Dendritic cell treated with granulocyte-macrophage colony-stimulating factor and Interleukin-4, amounts not matched to agents 40 ng/mL and 50 ng/mL, for 4 days (primary cell): ENCODE measurements at regions of chr13 and their contacts with region 1.

Region 1: DNA sequence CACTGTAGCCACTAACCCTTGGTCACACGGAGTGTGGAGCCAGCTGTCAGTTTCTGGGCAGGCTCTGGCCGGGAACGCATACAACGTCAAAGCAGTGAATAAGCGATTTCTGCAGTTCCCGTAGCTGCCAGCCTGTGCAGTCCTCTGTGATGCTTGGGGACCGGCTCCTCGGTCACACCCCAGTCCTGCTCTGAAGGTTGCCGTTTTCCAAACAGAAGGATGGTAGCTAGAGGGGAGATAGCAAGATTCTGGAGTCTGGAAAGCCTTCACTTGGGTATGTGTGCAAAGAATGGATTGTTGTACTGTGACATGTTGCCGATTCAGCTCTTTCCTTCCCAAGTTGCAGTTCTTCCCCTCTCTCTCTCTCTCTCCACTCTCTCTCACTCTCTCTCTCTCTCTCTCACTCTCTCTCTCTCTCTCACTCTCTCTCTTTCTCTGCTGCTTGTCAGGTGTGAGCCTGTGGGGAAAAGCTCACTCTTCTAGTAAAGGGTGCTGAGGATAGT is 38.7 kb upstream of the C1QTNF9 start:
- H3K4me3 Mint-ChIP-seq: peak overlapping the region; percentile 84
- H3K27ac Mint-ChIP-seq: peak overlapping the region; percentile 94
- H3K4me1 Mint-ChIP-seq: peaks cover 64% of the 10 kb centered on the region
- H3K27me3 Mint-ChIP-seq: no peaks in the 10 kb centered on the region

Region 2: GRCh38 chr13:24087605-24088225 is 183.0 kb before region 1 on chr13:
- intact Hi-C with region 1: no loop called
- H3K4me3 Mint-ChIP-seq: no peak overlapping the region
- H3K27ac Mint-ChIP-seq: no peak overlapping the region
- H3K4me1 Mint-ChIP-seq: no peaks in the 10 kb centered on the region
- H3K27me3 Mint-ChIP-seq: peaks cover 11% of the 10 kb centered on the region

Region 3: GRCh38 chr13:24233351-24233901 is 37.3 kb before region 1 on chr13:
- intact Hi-C with region 1: loop called (anchors 1 kb)
- H3K4me3 Mint-ChIP-seq: no peak overlapping the region
- H3K27ac Mint-ChIP-seq: no peak overlapping the region
- H3K4me1 Mint-ChIP-seq: no peaks in the 10 kb centered on the region
- H3K27me3 Mint-ChIP-seq: no peaks in the 10 kb centered on the region

Region 4: DNA sequence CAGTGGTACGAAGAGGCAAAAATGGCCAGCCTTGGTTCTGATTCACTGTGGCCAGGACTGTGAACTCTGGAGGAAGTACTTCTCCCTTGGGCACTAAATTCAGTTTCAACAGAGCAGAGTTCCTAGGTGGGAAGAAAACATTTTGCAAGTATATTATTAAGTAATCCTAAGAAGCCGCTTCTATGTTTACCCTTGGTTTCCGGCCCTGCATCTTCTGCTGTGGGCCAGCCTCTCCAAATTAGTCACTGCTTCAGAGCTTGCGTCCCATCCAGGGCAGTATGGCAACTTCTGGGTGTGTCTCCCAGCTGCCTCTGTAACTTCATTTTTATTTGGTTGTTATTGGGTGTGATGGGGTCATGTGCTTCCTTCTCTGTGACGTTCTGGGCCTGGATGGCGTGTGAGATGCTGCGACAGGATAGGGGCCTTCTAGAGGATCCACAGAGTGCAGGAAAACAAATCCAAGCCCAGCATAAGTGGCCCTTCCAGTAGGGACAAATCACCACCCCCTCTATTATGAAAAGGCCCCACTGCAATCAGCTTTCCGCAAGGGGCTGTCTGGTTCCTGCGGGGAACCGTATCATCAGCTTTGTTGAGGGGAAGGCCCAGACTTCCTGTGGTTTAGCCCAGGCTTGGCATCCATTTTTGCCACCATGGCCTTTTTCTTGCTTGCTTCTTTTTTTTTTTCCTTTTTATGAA is 16.4 kb before region 1 on chr13:
- intact Hi-C with region 1: loop called (anchors 2 kb)
- H3K4me3 Mint-ChIP-seq: no peak overlapping the region
- H3K27ac Mint-ChIP-seq: peak overlapping the region; percentile 81
- H3K4me1 Mint-ChIP-seq: peaks cover 53% of the 10 kb centered on the region
- H3K27me3 Mint-ChIP-seq: no peaks in the 10 kb centered on the region

Region 5: DNA sequence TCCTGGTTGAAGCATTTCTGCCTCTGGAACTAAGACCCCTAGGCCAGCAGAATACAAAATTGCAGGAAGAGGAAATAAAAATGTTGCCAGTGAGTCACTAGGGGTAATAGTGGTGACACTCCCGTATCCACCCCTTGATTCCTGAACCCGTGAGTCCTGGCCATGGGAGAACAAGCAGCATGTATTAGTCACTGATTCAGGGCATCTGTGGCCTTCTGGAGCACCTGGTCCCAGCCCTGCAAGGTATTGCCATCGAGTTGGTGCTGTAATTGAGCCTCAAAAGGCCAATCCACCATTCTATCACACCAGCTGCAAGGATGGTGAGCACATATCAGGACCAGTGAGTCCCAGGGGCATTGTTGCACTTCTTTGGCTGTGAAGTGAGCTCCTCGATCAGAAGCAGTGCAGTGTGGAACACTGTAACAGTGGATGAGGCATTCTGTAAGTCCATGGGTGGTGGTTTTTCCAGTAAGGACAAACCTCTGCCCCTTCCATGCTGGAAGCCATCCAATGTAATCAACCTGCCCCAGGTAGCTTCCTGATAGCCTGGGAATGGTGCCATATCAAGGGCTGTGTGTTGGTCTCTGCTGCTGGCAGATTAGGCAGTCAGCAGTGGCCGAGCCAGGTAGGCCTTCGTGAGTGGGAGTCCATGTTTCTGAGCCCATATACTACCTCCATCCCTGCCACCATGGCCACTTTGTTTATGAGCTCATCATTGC is 78.3 kb after region 1 on chr13:
- intact Hi-C with region 1: no loop called
- H3K4me3 Mint-ChIP-seq: no peak overlapping the region
- H3K27ac Mint-ChIP-seq: no peak overlapping the region
- H3K4me1 Mint-ChIP-seq: no peaks in the 10 kb centered on the region
- H3K27me3 Mint-ChIP-seq: peaks cover 8% of the 10 kb centered on the region

Region 6: DNA sequence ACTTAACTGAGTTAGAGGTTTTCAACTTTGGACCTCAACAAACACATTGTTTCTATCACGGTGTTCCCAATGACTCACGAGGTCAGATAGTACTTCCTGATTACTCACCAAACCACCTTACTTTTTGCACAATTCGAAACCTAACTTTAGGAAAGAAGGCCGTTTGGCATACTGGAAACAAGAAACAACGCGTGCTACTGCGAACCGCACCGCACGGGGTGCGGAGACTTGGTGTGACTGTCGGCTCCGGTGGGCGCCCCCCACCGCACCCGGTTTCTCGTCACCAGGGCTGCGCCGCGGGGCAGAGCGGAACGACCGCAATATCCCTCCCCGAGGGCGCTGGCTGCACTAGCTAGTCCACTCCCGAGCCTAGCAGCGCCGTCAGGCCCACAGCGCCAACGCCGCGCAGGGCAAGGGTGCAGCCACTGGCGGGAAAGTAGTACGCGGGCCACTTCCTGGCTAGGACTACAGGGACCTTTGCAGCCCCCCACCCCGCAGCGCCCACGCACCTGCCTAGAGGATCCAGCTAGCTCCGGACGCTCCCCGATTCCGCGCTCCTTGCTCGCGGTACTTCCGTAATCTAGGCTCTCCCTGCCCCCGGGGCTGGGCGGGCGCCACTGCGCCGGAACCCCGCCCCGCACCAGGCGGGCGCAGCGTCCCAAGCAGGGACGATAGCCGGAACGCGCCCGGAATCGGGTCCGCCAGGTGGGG is 241.7 kb after region 1 on chr13 and contains the start of gene PARP4:
- intact Hi-C with region 1: loop called (anchors 10 kb)
- H3K4me3 Mint-ChIP-seq: peak within 1 kb of the TSS; percentile 92
- H3K27ac Mint-ChIP-seq: peak within 1 kb of the TSS; percentile 99
- H3K4me1 Mint-ChIP-seq: peaks cover 30% of the 10 kb centered on the region
- H3K27me3 Mint-ChIP-seq: peaks cover 4% of the 10 kb centered on the region

Region 7: GRCh38 chr13:24985109-24985508 is 714.4 kb after region 1 on chr13:
- intact Hi-C with region 1: no loop called
- H3K4me3 Mint-ChIP-seq: no peak overlapping the region
- H3K27ac Mint-ChIP-seq: no peak overlapping the region
- H3K4me1 Mint-ChIP-seq: peaks cover 8% of the 10 kb centered on the region
- H3K27me3 Mint-ChIP-seq: peaks cover 47% of the 10 kb centered on the region

Region 8: DNA sequence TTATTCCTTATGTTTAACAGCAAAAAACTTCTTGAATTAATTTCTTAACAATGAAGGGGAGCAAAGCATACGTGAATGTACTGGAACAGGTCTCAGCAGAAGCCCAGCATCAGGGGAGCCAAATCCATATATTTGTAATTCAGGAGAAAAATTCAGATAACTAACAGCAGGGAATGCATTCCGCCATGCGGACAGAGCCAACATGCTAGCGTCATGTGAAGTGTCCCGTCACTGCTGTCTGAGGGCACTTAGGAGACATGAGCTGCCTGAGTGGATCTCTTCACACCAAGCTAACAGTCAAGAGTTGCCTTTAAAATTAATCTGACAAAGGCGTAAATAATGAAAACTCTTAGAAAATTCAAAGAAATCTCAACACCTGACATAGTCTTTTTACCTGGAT is 895.0 kb after region 1 on chr13:
- intact Hi-C with region 1: no loop called
- H3K4me3 Mint-ChIP-seq: no peak overlapping the region
- H3K27ac Mint-ChIP-seq: no peak overlapping the region
- H3K4me1 Mint-ChIP-seq: no peaks in the 10 kb centered on the region
- H3K27me3 Mint-ChIP-seq: peaks cover 31% of the 10 kb centered on the region